ENCODE measurements at regions of chr1 and their contacts with region 1.

Region 1: DNA sequence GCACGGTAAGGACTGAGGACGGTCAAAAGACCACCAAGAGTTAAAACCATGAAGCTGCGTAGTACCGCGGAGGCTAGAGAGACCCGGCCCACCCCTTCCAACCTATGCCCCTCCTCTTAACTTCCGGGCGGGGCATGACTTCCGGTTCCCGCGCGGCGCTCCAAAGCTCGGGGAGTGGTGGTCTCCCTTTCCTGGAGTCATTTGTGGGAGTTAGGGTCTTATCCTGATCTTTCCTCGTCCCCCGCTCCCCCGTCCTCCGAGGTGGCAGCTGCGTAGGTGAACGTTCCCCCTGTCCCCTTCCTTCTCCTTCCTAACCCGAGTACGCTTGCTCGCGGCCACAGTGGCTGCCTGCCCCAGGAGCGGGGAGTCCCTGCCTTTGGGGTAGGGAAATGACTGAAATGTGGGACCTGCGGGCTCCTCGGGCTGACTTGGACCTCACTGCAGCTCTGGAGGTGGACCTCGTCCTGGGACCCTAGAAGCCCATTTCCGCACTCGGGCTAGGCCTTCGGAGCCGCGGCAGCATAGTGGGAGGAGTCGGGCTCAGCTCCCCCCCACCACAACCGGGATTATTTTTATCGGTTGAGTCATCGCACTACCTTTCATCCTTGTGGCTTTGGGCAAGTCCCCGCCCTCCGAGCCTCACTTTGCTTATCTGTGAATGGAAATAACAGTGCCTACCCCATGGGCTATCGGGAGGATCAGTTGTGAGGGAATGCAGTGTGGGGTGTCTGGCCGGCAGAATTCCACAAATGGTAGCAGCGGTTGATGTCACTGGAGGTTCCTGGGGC is 24.1 kb downstream of the CELA3A start:
- DNase-seq: peak; percentile 80 to 94
- ATAC-seq: peak; percentile 71 to 88 (median 82)
- H3K4me3 ChIP-seq: peak overlapping the region; percentile 59
- H3K4me3 Mint-ChIP-seq: peak overlapping the region; percentile 91
- H3K27ac ChIP-seq: peak overlapping the region; percentile 85
- H3K27ac Mint-ChIP-seq: peak overlapping the region; percentile 95 to 97
- H3K4me1 ChIP-seq: peaks cover 28% of the 10 kb centered on the region
- H3K4me1 Mint-ChIP-seq: peaks cover 36 to 38% of the 10 kb centered on the region in 2 donors
- H3K27me3 ChIP-seq: no peaks in the 10 kb centered on the region
- H3K27me3 Mint-ChIP-seq: no peaks in the 10 kb centered on the region
- CTCF ChIP-seq: no peak

Region 2: GRCh38 chr1:21782868-21783678 is 242.5 kb before region 1 on chr1 and contains the start of gene USP48:
- intact Hi-C with region 1: loop called (anchors 1 kb)
- DNase-seq: peak; percentile 97 to 99
- ATAC-seq: peak; percentile 84 to 95 (median 88)
- H3K4me3 ChIP-seq: peak within 1 kb of the TSS; percentile 78
- H3K4me3 Mint-ChIP-seq: peak within 1 kb of the TSS; percentile 98
- H3K27ac ChIP-seq: peak within 1 kb of the TSS; percentile 97
- H3K27ac Mint-ChIP-seq: peak within 1 kb of the TSS; percentile 100
- H3K4me1 ChIP-seq: peaks cover 20% of the 10 kb centered on the region
- H3K4me1 Mint-ChIP-seq: peaks cover 30 to 34% of the 10 kb centered on the region in 2 donors
- H3K27me3 ChIP-seq: no peaks in the 10 kb centered on the region
- H3K27me3 Mint-ChIP-seq: peaks cover 0 to 4% of the 10 kb centered on the region in 2 donors
- CTCF ChIP-seq: no peak
- total RNA-seq, gene USP48: 71.4 to 127 (median 90.5) TPM

Region 3: GRCh38 chr1:21937372-21938221 is 88.0 kb before region 1 on chr1:
- intact Hi-C with region 1: no loop called
- DNase-seq: peak; percentile 53 to 79
- ATAC-seq: peak; percentile 93 to 95 (median 94)
- H3K4me3 ChIP-seq: peak overlapping the region; percentile 33
- H3K4me3 Mint-ChIP-seq: peak overlapping the region; percentile 88
- H3K27ac ChIP-seq: no peak overlapping the region
- H3K27ac Mint-ChIP-seq: peak overlapping the region in 1 of 2 donors; percentile 79
- H3K4me1 ChIP-seq: peaks cover 13% of the 10 kb centered on the region
- H3K4me1 Mint-ChIP-seq: peaks cover 7 to 13% of the 10 kb centered on the region in 2 donors
- H3K27me3 ChIP-seq: peaks cover 9% of the 10 kb centered on the region
- H3K27me3 Mint-ChIP-seq: peaks cover 0 to 26% of the 10 kb centered on the region in 2 donors
- CTCF ChIP-seq: no peak

Region 4: DNA sequence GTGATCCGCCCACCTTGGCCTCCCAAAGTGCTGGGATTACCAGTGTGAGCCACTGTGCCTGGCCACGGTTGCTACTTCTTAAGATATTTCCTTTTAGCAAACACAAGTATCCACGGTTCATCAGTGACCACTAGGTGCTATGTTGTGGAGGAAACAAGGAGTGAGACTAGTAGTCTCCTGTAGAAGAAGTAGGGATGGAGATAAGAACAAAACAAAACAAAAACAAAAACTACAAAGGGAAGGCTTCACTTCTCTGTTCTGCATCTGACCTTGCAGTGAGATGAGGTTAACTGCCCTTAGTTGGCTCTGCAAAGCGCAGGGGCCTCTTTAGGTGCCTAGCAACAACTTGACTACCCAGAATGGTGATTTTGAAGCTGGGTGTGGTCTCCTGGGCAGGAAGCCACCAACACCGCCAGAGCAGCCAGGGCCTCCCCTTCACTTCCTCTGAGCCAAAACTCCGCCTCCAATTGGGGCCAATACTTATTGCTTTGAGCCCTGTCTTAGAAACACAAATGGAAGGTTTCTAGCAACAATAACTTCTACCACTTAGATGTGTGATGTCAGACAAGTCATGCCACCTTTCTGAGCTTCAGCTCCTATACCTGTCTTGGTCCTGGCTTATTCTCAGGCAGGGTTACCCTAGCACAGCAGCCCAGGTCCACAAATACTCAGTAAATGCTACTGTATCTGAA is 14.2 kb after region 1 on chr1:
- intact Hi-C with region 1: loop called (anchors 1 kb)
- DNase-seq: peak; percentile 81 to 98
- ATAC-seq: peak; percentile 95 to 99 (median 98)
- H3K4me3 ChIP-seq: peak overlapping the region; percentile 19
- H3K4me3 Mint-ChIP-seq: peak overlapping the region; percentile 77
- H3K27ac ChIP-seq: peak overlapping the region; percentile 91
- H3K27ac Mint-ChIP-seq: peak overlapping the region; percentile 95 to 96
- H3K4me1 ChIP-seq: peaks cover 44% of the 10 kb centered on the region
- H3K4me1 Mint-ChIP-seq: peaks cover 40% of the 10 kb centered on the region in 2 donors
- H3K27me3 ChIP-seq: no peaks in the 10 kb centered on the region
- H3K27me3 Mint-ChIP-seq: no peaks in the 10 kb centered on the region
- CTCF ChIP-seq: no peak